Activated B cell treated with CpG ODN at 0.5 μM for 24 hours (primary cell): ENCODE measurements at regions of chr1 and their contacts with region 1.

Region 1: DNA sequence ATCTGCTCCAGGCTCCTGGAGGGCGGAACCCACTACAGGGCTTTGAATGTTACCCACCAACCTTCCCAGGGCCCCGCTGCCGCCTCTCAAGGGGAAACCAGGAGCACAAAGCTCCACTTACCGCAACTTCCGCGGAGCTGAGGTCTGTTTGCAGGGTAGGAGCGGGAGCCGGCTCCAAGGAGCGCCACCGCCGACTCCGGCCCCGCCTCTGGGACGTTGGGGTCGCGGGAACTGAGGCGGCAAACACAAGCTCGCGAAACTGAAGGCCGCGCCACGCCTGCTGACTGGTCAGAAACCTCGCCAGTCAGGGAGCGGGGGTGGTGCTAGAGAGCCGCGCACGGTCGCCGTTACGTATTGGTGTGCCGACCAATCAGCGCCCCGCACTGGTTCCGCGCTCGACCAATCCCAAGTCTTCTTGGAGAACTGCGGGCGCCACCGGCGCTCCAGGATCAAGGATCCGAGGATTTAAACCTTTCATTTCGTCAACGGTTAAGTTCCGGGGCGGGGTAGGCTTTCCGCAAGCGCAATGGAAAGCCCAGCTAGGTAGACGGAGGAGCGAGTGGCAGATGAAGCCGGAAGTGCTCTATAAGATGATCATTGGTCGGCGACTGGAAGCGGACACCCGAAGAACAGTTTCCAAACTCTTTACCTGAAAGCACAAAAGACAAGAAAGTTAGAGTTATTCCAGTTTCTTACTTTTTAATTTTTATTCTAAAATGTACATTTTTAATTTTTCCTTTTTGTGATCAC is at the start of gene STIL:
- DNase-seq: peak; percentile 89
- ATAC-seq: peak; percentile 98
- H3K4me3 Mint-ChIP-seq: peak within 1 kb of the TSS; percentile 94
- H3K27ac Mint-ChIP-seq: peak within 1 kb of the TSS; percentile 95
- H3K4me1 Mint-ChIP-seq: peaks cover 12% of the 10 kb centered on the region
- H3K27me3 Mint-ChIP-seq: no peaks in the 10 kb centered on the region
- CTCF ChIP-seq: no peak
- total RNA-seq, gene STIL: 2.6 and 4.2 TPM in 2 replicates

Region 2: DNA sequence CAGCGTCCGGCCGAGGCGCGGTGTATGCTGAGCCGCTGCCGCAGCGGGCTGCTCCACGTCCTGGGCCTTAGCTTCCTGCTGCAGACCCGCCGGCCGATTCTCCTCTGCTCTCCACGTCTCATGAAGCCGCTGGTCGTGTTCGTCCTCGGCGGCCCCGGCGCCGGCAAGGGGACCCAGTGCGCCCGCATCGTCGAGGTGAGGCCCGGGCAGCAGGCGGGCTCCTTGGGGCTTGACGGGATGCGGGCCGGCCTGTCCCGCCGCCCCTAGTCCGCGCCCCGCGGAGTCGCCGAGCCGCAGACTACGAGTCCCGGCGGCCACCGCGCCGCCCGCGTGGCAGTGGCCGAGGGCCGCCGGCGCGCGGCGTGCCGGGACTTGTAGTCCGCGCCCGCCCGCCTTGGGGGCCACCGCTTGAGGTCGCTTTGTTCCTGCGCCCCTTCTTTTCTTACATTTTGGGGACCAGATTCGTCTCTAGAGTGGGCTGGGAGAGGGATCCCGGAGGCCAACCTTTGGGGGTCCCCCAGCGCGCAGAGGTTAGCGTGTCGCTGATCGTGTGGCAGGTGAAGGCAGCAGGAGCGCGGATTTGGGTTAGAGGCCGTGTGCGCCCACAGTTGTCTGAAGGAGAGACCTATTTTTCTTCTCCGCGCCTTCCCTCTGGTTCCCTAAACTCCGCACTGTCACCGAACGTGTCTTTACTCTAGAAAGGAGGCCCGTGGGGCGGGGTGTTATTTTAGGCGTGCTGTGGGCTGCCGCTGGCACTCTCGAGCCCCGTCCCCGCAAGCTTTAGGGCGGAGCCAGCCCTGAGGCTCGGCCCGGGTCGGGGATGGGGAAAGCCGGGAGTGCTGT is 20.1 kb after region 1 on chr1:
- CTCF ChIA-PET with region 1: interaction called, 5 read pairs
- POLR2A ChIA-PET with region 1: interaction called, 35 read pairs
- intact Hi-C with region 1: loop called (anchors 1 kb)
- DNase-seq: peak; percentile 78
- ATAC-seq: peak; percentile 86
- H3K4me3 Mint-ChIP-seq: no peak overlapping the region
- H3K27ac Mint-ChIP-seq: peak overlapping the region; percentile 92
- H3K4me1 Mint-ChIP-seq: peaks cover 19% of the 10 kb centered on the region
- H3K27me3 Mint-ChIP-seq: no peaks in the 10 kb centered on the region
- CTCF ChIP-seq: no peak